A673 (cell line): ENCODE measurements at regions of chr16 and their contacts with region 1.

Region 1: DNA sequence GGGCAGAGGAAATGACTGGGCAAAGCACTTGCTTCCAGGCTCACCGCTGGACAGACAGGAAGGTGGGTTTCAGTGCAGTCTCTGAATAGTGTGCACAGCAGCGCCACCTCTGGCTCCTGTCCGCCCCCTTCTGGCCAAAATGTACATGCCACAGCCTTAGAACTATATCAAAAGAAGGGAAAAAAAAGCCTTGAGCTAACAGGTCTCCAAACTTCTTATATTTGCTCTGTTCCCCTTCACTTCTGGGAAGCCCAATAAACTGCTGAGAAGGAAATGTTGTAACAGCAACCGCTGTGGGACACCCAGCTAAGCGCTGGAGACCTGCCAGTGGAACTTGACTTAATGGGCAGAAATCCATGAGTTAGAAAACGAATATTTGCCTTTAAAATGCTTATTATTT is 17.5 kb downstream of the COG7 start:
- DNase-seq: peak; percentile 92
- H3K4me3 ChIP-seq: no peak overlapping the region
- H3K27ac ChIP-seq: peak overlapping the region; percentile 72
- H3K4me1 ChIP-seq: peaks cover 30% of the 10 kb centered on the region
- H3K27me3 ChIP-seq: no peaks in the 10 kb centered on the region
- CTCF ChIP-seq: peak; percentile 97

Region 2: DNA sequence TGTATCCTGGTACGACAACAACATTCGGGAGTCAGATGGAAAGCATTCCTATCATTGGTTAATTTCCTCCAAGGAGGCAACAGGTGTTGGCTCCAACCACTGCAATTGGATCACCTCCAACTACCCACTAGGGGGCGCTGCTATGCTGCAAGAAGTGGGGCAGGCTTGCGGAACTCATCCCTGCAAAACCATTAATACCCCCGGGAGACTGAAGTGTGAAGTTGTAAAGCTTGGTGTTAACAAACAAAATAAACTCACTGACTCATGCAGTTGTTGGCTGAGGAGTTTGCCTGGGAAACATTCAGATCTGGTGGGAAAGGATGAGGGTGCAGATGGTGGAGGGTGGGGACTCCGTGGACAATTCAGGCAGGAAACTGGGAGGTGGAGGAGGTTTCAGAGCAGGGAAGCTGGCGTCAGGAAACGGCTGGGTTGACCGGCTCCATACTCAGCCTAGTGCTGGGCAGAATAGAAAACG is 536.6 kb before region 1 on chr16:
- CTCF ChIA-PET with region 1: interaction called, 6 read pairs
- POLR2A ChIA-PET with region 1: no interaction called
- intact Hi-C with region 1: loop called (anchors 5 kb)
- DNase-seq: peak; percentile 89
- H3K4me3 ChIP-seq: no peak overlapping the region
- H3K27ac ChIP-seq: no peak overlapping the region
- H3K4me1 ChIP-seq: no peaks in the 10 kb centered on the region
- H3K27me3 ChIP-seq: peaks cover 13% of the 10 kb centered on the region
- CTCF ChIP-seq: peak; percentile 94

Region 3: GRCh38 chr16:23006380-23006779 is 429.1 kb before region 1 on chr16:
- CTCF ChIA-PET with region 1: no interaction called
- POLR2A ChIA-PET with region 1: no interaction called
- intact Hi-C with region 1: loop called (anchors 10 kb)
- DNase-seq: no peak
- H3K4me3 ChIP-seq: no peak overlapping the region
- H3K27ac ChIP-seq: no peak overlapping the region
- H3K4me1 ChIP-seq: no peaks in the 10 kb centered on the region
- H3K27me3 ChIP-seq: peaks cover 30% of the 10 kb centered on the region
- CTCF ChIP-seq: no peak

Region 4: GRCh38 chr16:23060458-23061320 is 374.8 kb before region 1 on chr16:
- CTCF ChIA-PET with region 1: no interaction called
- POLR2A ChIA-PET with region 1: no interaction called
- intact Hi-C with region 1: loop called (anchors 10 kb)
- DNase-seq: peak; percentile 83
- H3K4me3 ChIP-seq: no peak overlapping the region
- H3K27ac ChIP-seq: no peak overlapping the region
- H3K4me1 ChIP-seq: no peaks in the 10 kb centered on the region
- H3K27me3 ChIP-seq: no peaks in the 10 kb centered on the region
- CTCF ChIP-seq: peak; percentile 86

Region 5: GRCh38 chr16:23182460-23183309 is 252.8 kb before region 1 on chr16 and contains the start of gene SCNN1G:
- CTCF ChIA-PET with region 1: interaction called, 9 read pairs
- POLR2A ChIA-PET with region 1: no interaction called
- intact Hi-C with region 1: loop called (anchors 1 kb)
- DNase-seq: peak; percentile 88
- H3K4me3 ChIP-seq: peak within 1 kb of the TSS; percentile 69
- H3K27ac ChIP-seq: peak within 1 kb of the TSS; percentile 74
- H3K4me1 ChIP-seq: peaks cover 6% of the 10 kb centered on the region
- H3K27me3 ChIP-seq: no peaks in the 10 kb centered on the region
- CTCF ChIP-seq: peak; percentile 78
- total RNA-seq, gene SCNN1G: 15.6 and 22.3 TPM in 2 replicates

Region 6: GRCh38 chr16:23893986-23894385 is 458.5 kb after region 1 on chr16:
- CTCF ChIA-PET with region 1: no interaction called
- POLR2A ChIA-PET with region 1: no interaction called
- intact Hi-C with region 1: no loop called
- DNase-seq: no peak
- H3K4me3 ChIP-seq: no peak overlapping the region
- H3K27ac ChIP-seq: no peak overlapping the region
- H3K4me1 ChIP-seq: peaks cover 46% of the 10 kb centered on the region
- H3K27me3 ChIP-seq: no peaks in the 10 kb centered on the region
- CTCF ChIP-seq: no peak